Activated B cell treated with CpG ODN at 0.5 μM for 24 hours (primary cell): ENCODE measurements at regions of chr7 and their contacts with region 1.

Region 1: DNA sequence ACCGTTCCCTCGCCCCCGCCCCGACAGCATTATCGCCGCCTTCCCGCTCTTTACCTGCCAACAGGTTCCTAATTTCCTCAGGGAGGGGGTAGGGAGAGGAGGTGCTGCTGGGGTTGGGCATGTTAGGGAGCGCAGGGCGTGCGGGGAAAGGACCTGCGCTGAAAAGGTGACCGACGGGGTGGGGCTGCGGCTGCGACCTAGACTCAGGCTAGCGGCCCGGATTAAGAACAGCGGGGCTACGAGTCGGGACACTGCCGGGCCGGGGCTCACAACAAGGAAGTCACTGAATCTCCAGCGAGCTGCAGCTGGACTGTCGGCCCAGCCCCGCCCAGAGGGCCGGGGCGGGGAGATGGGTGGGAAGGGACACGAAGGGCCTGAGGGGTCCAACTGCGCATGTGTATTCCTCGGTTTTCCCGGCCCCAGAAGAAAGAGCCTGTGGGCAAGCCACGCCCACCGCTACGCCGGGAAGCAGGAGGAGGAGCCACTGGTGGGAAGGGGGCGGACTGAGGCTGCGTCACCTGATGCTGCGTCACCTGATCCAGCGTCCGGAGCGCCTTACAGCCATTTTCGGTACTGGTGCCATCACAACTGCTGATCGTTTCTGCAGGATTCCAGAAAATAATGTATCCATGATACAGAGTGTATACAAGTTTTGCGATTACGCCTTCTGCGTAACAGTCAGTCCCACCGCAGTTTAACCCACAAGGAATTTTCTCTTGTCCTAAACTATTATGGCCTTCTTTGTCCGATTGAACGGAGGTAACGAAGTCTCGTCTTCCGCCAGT is at the start of gene SKAP2:
- DNase-seq: peak; percentile 92
- ATAC-seq: peak; percentile 84
- H3K4me3 Mint-ChIP-seq: peak within 1 kb of the TSS; percentile 99
- H3K27ac Mint-ChIP-seq: peak within 1 kb of the TSS; percentile 99
- H3K4me1 Mint-ChIP-seq: peaks cover 32% of the 10 kb centered on the region
- H3K27me3 Mint-ChIP-seq: no peaks in the 10 kb centered on the region
- CTCF ChIP-seq: no peak
- total RNA-seq, gene SKAP2: 70.3 and 75.6 TPM in 2 replicates

Region 2: DNA sequence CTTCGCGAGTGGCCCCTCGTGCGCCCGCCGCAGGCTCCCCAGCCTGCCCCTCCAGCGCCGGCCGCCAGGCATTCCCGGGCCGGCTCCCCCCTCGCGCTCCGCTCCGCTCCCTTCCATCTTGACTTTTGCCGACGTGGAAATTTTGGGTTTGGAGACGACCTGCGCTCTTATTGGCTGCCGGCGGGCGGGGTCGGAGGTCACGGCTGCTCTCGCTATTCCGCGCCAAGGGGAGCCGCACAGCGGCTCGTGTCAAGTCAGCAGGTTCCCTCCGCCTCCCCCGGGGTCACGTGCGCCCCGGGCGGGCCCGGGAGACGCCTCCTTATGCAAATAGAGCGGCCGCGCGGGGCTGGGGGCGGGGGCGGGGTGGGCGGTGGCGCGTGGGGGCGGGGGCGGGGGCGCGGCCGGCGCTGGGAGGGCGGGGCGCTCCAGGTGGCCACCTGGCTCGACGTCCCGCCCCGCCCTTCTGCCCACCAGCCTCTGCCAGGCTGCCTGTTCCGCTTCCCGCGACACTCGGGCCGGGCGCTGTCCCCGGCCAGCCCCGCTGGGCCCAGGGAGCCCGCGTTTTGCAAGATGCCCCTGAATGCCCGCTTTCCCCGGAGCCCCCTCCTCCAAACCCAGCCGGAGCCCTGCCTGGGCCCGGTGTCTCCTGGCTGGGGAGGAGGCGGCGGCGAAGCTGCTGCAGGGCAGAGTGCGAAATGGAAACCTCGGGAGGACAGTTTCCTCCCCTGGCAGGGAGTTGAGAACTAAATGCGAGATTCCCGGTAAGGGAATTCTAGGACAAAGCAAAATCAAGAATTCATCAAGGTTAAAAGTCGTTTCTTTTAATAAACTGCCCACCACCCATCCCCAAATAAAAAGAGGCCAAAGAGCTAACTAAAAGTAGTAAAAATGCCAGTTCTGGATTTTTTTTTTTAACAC is 913.2 kb before region 1 on chr7:
- CTCF ChIA-PET with region 1: no interaction called
- POLR2A ChIA-PET with region 1: no interaction called
- intact Hi-C with region 1: loop called (anchors 5 kb)
- DNase-seq: peak; percentile 82
- ATAC-seq: peak; percentile 93
- H3K4me3 Mint-ChIP-seq: peak overlapping the region; percentile 92
- H3K27ac Mint-ChIP-seq: peak overlapping the region; percentile 81
- H3K4me1 Mint-ChIP-seq: peaks cover 35% of the 10 kb centered on the region
- H3K27me3 Mint-ChIP-seq: peaks cover 31% of the 10 kb centered on the region
- CTCF ChIP-seq: no peak

Region 3: DNA sequence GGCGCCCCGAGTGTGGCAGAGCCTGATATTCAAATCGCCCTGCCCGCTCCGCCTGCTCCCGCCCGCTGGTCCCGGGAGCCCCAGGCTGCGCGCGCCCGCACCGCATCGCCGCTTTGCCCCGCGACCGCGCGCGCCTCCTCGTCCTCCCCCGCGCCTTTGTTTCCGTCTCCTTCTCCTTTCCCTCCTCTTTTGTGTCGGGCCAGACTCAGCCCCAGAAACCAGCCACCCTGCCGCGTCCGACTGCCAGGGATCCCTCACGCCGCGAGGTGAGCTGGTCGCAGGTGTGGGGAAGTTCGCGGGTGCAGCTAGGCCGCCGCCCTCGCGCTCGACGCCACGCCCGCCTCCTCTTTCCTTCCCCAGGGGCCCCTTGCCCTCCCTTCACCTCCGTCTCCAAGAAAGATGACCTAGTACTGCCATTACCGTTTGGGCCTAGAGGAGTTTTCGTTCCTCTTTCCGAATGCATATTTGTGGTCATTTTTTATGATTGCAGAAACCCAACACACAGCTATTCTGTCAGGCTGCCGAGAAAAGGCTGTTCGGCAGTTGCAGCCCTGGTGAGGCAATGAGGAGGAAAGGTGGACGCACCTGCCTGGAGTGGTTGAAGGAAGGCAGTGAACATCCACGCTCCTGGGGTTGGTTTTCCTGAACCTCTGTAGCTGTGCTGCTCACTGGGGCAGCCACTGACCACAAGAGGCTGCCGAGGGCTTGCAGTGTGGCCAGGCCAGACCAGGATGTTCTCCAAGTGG is 465.6 kb before region 1 on chr7:
- CTCF ChIA-PET with region 1: no interaction called
- POLR2A ChIA-PET with region 1: interaction called, 6 read pairs
- intact Hi-C with region 1: loop called (anchors 1 kb)
- DNase-seq: peak; percentile 83
- ATAC-seq: peak; percentile 89
- H3K4me3 Mint-ChIP-seq: peak overlapping the region; percentile 98
- H3K27ac Mint-ChIP-seq: peak overlapping the region; percentile 98
- H3K4me1 Mint-ChIP-seq: peaks cover 36% of the 10 kb centered on the region
- H3K27me3 Mint-ChIP-seq: no peaks in the 10 kb centered on the region
- CTCF ChIP-seq: no peak

Region 4: GRCh38 chr7:27095897-27096767 is 231.6 kb after region 1 on chr7 and contains the start of gene HOXA1:
- CTCF ChIA-PET with region 1: no interaction called
- POLR2A ChIA-PET with region 1: interaction called, 6 read pairs
- intact Hi-C with region 1: loop called (anchors 1 kb)
- DNase-seq: peak; percentile 67
- ATAC-seq: peak; percentile 87
- H3K4me3 Mint-ChIP-seq: peak within 1 kb of the TSS; percentile 94
- H3K27ac Mint-ChIP-seq: peak within 1 kb of the TSS; percentile 76
- H3K4me1 Mint-ChIP-seq: peaks cover 33% of the 10 kb centered on the region
- H3K27me3 Mint-ChIP-seq: peaks cover 52% of the 10 kb centered on the region
- CTCF ChIP-seq: no peak
- total RNA-seq, gene HOXA1: 0.55 and 0.61 TPM in 2 replicates

Region 5: GRCh38 chr7:27662490-27663205 is 798.1 kb after region 1 on chr7 and contains the start of gene HIBADH:
- CTCF ChIA-PET with region 1: no interaction called
- POLR2A ChIA-PET with region 1: no interaction called
- intact Hi-C with region 1: loop called (anchors 1 kb)
- DNase-seq: peak; percentile 92
- ATAC-seq: peak; percentile 97
- H3K4me3 Mint-ChIP-seq: peak within 1 kb of the TSS; percentile 85
- H3K27ac Mint-ChIP-seq: peak within 1 kb of the TSS; percentile 81
- H3K4me1 Mint-ChIP-seq: peaks cover 14% of the 10 kb centered on the region
- H3K27me3 Mint-ChIP-seq: no peaks in the 10 kb centered on the region
- CTCF ChIP-seq: no peak
- total RNA-seq, gene HIBADH: 9.8 and 10.0 TPM in 2 replicates

Region 6: DNA sequence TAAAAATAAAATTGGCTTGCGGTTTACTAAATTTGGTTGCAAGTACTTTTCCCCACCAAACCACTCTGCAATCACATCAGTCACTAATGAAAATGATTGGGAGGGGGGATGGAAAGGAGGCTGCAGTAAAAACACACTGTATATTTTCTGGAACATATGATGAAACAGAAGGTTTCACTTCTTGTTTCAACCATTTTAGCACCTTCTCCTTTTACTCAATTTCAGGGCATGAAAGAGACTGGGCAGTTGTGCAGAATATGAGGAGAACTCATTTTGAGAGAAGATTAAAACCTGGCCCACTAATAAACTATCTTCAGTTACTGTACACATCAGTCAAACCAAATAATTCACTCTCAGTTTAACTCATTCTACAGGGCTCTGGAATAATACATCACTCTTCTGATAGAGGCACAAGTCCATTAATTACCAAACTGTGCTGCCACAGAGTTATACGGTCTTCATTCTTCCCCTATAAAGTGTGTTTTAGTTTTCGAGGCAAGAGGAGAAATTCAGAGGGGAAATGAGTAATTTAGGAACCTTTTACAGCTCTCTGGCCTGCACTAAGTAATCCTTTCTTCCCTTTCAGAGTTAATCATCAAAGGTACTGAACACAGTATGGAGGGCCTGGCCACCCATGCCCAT is 1290.6 kb after region 1 on chr7:
- CTCF ChIA-PET with region 1: no interaction called
- POLR2A ChIA-PET with region 1: no interaction called
- intact Hi-C with region 1: loop called (anchors 10 kb)
- DNase-seq: no peak
- ATAC-seq: peak; percentile 68
- H3K4me3 Mint-ChIP-seq: peak overlapping the region; percentile 68
- H3K27ac Mint-ChIP-seq: peak overlapping the region; percentile 94
- H3K4me1 Mint-ChIP-seq: peaks cover 95% of the 10 kb centered on the region
- H3K27me3 Mint-ChIP-seq: no peaks in the 10 kb centered on the region
- CTCF ChIP-seq: no peak